ENCODE measurements at regions of chr1 and their contacts with region 1.

Region 1: DNA sequence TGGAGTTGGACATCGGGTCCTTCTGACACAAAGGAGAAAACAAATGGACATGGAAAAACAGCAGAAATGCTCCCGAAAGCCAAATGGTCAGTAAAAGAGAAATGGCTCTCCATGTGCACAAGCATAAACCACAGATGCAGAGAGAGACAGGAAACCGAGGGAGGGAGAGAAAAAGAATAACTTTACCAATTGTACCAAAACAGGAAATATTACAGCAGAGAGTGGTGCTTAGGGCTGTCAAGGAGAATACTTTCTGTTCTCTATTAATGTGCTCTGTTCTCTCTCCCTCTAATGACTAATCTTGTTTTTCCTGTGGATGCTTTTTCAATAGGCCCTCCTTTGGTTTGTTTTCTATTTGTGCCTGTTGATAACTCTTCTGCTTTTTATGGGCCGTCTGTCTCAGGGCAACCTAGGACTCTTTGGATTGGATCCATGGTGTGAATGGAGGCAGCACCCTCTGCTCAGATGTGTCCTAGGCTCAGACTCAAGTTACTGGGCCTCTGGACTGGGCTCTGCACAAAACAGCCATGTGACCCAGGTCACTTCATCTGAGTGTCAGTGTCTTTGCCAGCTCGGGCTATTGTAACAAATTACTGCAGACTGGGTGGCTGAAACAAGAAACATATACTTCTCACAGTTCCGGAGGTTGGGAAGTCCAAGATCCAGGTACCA is 663.0 kb downstream of the NPHP4 start:
- DNase-seq: no peak
- H3K4me3 ChIP-seq: no peak overlapping the region
- H3K27ac ChIP-seq: no peak overlapping the region
- H3K4me1 ChIP-seq: no peaks in the 10 kb centered on the region
- H3K27me3 ChIP-seq: no peaks in the 10 kb centered on the region
- CTCF ChIP-seq: no peak
- POLR2A ChIP-seq: no peak

Region 2: GRCh38 chr1:4292861-4293260 is 1036.3 kb before region 1 on chr1:
- intact Hi-C with region 1: no loop called
- DNase-seq: no peak
- H3K4me3 ChIP-seq: no peak overlapping the region
- H3K27ac ChIP-seq: no peak overlapping the region
- H3K4me1 ChIP-seq: no peaks in the 10 kb centered on the region
- H3K27me3 ChIP-seq: no peaks in the 10 kb centered on the region
- CTCF ChIP-seq: no peak
- POLR2A ChIP-seq: no peak

Region 3: GRCh38 chr1:5297180-5297885 is 31.9 kb before region 1 on chr1:
- intact Hi-C with region 1: loop called (anchors 1 kb)
- DNase-seq: no peak
- H3K4me3 ChIP-seq: no peak overlapping the region
- H3K27ac ChIP-seq: no peak overlapping the region
- H3K4me1 ChIP-seq: no peaks in the 10 kb centered on the region
- H3K27me3 ChIP-seq: peaks cover 0 to 61% of the 10 kb centered on the region in 2 donors
- CTCF ChIP-seq: no peak
- POLR2A ChIP-seq: no peak

Region 4: DNA sequence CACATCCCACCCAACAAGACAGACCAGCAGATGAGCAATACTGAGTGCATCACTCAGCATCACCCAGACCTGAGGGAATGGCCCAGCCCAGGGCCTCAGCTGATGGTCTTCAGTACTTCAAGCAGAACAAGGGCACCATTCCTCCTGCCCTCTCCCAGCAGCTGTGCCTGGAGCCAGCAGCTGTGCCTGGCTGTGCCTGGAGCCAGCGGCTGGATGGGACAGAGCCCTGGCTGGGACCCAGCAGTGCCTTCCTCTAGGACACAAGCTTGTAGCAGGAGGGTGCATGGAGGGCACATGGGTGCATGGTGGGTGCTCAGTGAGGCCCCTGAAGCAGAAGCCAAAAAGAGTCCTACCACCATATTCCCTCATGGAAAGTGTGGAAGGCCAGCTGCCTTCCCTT is 79.2 kb after region 1 on chr1:
- intact Hi-C with region 1: no loop called
- DNase-seq: no peak
- H3K4me3 ChIP-seq: no peak overlapping the region
- H3K27ac ChIP-seq: no peak overlapping the region
- H3K4me1 ChIP-seq: no peaks in the 10 kb centered on the region
- H3K27me3 ChIP-seq: peaks cover 0 to 8% of the 10 kb centered on the region in 2 donors
- CTCF ChIP-seq: no peak
- POLR2A ChIP-seq: no peak

Region 5: DNA sequence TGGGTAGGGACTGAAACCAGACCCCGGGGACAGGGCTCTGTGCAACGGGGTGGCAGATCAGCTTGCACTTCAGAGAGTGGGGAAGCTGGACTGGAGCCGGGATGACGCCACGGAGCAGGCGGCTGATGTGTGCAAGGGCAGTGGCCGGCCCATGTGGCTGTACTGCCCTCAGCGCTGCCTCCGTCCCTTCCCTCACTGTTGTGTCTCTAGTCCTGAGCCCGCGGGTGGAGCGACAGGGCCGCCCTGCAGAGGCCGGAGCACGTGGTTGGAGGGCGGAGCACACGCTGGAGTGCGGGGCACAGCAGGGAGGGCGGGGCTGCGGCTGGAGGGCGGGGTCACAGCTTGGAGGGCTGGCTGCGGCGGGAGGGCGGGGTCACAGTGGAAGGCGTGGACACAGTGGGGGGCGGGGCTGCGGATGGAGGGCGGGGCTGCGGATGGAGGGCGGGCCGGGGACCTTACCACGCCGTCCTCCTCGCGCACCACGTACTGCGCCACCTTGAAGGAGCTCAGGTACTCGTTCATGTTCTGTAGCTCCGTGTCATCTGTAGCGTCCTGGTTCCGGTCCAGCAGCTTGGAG is 798.5 kb after region 1 on chr1:
- intact Hi-C with region 1: no loop called
- DNase-seq: peak in 1 of 2 donors; percentile 37
- H3K4me3 ChIP-seq: peak overlapping the region in 2 of 3 donors; percentile 27 to 39
- H3K27ac ChIP-seq: no peak overlapping the region
- H3K4me1 ChIP-seq: no peaks in the 10 kb centered on the region
- H3K27me3 ChIP-seq: peaks cover 0 to 11% of the 10 kb centered on the region in 2 donors
- CTCF ChIP-seq: no peak
- POLR2A ChIP-seq: no peak